ENCODE measurements at regions of chr6 and their contacts with region 1.

Region 1: GRCh38 chr6:136226027-136226673 is 24.0 kb downstream of the MTFR2 start:
- DNase-seq: peak; percentile 38
- H3K4me3 Mint-ChIP-seq: no peak overlapping the region
- H3K27ac Mint-ChIP-seq: no peak overlapping the region
- H3K4me1 Mint-ChIP-seq: peaks cover 30% of the 10 kb centered on the region
- H3K27me3 Mint-ChIP-seq: no peaks in the 10 kb centered on the region

Region 2: DNA sequence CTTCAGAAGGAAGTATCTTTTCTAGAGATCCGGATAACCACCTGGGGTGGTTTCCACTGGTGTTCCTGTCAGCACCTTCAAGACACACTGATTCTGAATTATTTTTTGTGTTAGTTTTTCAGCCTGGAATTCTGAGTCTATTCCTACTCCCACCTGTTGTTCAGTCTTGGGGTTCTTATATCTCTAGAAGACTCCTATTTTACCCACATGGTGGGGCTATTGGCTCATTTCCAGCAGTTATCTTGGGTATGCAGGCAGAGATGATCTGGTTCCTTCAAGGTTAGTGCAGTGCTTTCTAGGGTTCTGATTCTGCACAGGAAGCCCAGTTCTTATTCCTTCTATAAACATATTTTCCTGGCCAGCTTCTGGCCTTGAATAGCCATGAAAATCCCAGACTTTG is 550.3 kb before region 1 on chr6:
- intact Hi-C with region 1: loop called (anchors 1 kb)
- DNase-seq: peak; percentile 17
- H3K4me3 Mint-ChIP-seq: no peak overlapping the region
- H3K27ac Mint-ChIP-seq: peak overlapping the region; percentile 75
- H3K4me1 Mint-ChIP-seq: peaks cover 41% of the 10 kb centered on the region
- H3K27me3 Mint-ChIP-seq: no peaks in the 10 kb centered on the region